ENCODE measurements at regions of chr17 and their contacts with region 1.

Region 1: GRCh38 chr17:6473128-6473767 is 29.0 kb downstream of the PIMREG start:
- DNase-seq: peak; percentile 91
- CTCF ChIP-seq: peak; percentile 91

Region 2: GRCh38 chr17:6427279-6427781 is 45.9 kb before region 1 on chr17:
- CTCF ChIA-PET with region 1: no interaction called
- POLR2A ChIA-PET with region 1: no interaction called
- DNase-seq: peak; percentile 43
- CTCF ChIP-seq: no peak

Region 3: DNA sequence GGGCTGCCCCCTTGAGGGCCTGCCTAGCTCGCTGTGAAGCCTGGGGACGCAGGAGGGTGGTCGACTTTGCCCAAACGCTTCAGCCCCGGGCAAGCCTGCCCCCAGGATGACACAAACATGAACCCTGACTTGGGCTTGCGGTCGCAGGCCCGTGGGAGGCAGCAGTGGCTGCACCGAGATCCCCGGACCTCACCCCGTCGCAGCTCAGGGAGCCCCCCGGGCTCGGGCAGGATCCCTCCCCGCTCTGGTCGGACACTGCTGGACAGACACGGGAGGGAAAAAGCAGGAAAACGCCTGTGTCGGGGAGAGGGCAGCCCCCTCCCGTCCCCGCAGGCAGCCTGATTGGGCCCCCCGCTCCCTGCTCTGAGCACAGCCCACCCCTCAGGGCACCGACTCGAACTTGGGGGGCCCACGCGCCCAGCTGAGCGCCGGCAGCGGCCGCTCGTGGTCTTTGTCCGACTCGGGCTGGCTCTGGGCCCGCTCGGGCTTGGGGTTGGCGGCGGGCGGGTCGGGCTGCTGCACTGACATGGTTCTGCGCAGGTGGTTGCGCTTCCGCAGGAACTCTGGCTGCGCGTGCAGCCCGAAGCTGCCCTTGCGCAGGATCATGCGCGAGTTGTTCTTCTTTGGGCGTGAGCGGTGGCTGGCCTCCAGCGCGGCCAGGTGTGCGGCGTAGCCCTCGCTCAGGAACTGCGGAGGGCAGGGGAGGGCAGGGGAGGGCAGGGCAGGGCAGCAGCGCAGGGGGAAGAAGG is 18.1 kb before region 1 on chr17:
- CTCF ChIA-PET with region 1: interaction called, 16 read pairs
- POLR2A ChIA-PET with region 1: no interaction called
- DNase-seq: no peak
- CTCF ChIP-seq: no peak

Region 4: GRCh38 chr17:6461792-6462524 is 11.3 kb before region 1 on chr17:
- CTCF ChIA-PET with region 1: interaction called, 22 read pairs
- POLR2A ChIA-PET with region 1: no interaction called
- DNase-seq: no peak
- CTCF ChIP-seq: no peak

Region 5: DNA sequence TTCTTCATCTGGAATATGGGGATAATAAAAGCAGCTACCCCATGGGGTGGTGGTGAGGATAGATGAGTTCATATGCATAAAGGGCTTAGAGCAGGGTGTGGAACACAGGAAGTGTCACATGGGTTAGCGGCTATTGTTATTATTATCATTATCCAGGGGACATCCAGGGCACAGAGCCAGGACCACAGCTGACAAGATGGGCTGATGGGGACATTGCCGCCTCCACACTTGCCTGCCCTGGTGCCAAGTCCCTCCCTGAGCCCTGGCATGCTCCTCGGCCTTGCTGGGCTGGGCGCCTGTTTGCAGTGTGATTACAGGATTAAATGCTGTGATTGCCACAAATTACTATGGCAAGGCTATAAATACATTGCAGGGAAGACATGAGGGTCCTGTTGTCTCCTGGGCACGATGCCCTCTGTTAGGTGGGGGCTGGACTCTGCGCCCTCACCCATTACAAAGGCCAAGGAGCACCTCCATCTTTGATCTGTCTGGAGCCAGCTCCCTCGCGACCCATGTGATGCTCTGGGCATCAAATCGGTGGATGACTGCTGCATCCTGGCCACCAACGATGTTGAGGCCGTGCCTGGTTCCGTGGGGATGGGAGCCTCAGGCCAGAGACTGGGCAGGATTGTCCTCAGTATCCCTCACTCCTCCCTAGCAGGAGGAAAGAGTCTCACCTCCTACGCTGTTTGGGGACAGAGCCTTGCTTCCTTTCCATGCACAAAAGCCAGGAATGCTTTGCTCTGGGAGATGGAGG is 14.2 kb after region 1 on chr17:
- CTCF ChIA-PET with region 1: interaction called, 41 read pairs
- POLR2A ChIA-PET with region 1: no interaction called
- DNase-seq: no peak
- CTCF ChIP-seq: no peak

Region 6: DNA sequence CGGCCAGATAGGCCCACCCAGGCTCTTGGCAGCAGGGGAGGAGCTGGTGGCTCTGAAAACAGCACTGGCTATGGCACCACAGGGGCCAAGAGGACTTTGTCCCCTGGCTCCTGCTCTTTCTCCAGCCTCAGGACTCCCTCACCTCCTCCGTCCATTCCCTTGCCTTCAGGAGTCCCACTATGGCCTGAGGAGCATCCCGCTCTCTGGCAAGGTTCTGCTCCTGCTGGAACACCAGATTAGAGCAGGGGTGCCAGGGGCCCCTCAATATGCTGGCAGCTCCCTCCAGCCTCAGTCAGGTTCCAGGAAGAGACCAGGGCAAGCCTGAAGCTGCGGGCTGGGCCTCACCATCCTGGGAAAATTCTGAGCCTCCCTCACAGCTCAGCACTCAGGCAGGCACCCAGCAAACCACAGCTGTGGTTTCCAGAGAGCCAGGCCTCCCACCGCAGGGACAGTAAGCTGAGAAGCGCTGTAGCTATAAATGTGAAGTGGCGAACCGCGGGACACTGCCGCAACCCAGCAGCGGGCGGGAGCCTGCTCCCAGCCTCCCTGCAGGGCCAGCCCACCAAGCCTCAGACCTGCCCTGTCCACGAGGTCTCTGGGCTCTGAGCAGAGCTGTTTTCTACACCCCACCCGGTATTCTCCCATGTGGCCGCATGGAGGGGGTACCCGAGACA is 204.0 kb after region 1 on chr17:
- CTCF ChIA-PET with region 1: no interaction called
- POLR2A ChIA-PET with region 1: no interaction called
- DNase-seq: no peak
- CTCF ChIP-seq: no peak